Activated T-helper 2 cell treated with anti-CD3 and anti-CD28 coated beads, Interferon-gamma antibody, Interleukin-2, Interleukin-4, amounts not matched to agents 10 μg/mL and 5 μg/mL and 100 μg/mL, durations not matched to agents 14 hours and 24 hours and 36 hours (primary cell): ENCODE measurements at regions of chr14 and their contacts with region 1.

Region 1: GRCh38 chr14:64540208-64541157 is at the start of gene HSPA2:
- DNase-seq: peak; percentile 95
- H3K4me3 Mint-ChIP-seq: peak within 1 kb of the TSS; percentile 93
- H3K27ac Mint-ChIP-seq: peak within 1 kb of the TSS; percentile 78
- H3K4me1 Mint-ChIP-seq: peaks cover 27% of the 10 kb centered on the region
- H3K27me3 Mint-ChIP-seq: peaks cover 42% of the 10 kb centered on the region
- total RNA-seq, gene HSPA2: 6.6 and 7.1 TPM in 2 replicates

Region 2: DNA sequence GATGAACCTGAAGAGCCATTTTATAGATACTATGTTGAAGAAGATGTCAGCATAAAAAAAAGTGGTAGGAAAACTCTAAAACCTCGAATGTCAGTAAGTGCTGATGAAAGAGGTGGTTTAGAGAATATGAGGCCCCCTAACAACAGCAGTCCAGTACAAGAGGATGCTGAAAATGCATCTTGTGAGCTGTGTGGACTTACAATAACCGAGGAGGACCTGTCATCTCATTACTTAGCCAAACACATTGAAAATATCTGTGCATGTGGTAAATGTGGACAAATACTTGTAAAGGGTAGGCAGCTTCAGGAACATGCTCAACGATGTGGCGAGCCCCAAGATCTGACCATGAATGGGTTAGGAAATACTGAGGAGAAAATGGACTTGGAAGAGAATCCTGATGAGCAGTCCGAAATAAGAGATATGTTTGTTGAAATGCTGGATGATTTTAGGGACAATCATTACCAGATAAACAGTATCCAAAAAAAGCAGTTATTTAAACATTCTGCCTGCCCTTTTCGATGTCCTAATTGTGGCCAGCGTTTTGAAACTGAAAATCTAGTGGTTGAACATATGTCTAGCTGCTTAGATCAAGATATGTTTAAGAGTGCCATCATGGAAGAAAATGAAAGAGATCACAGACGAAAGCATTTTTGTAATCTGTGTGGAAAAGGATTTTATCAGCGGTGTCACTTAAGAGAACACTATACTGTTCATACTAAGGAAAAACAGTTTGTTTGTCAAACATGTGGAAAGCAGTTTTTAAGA is 17.7 kb before region 1 on chr14:
- intact Hi-C with region 1: loop called (anchors 2 kb)
- DNase-seq: no peak
- H3K4me3 Mint-ChIP-seq: no peak overlapping the region
- H3K27ac Mint-ChIP-seq: no peak overlapping the region
- H3K4me1 Mint-ChIP-seq: peaks cover 11% of the 10 kb centered on the region
- H3K27me3 Mint-ChIP-seq: no peaks in the 10 kb centered on the region

Region 3: GRCh38 chr14:64636208-64636979 is 95.9 kb after region 1 on chr14:
- intact Hi-C with region 1: loop called (anchors 2 kb)
- DNase-seq: peak; percentile 56
- H3K4me3 Mint-ChIP-seq: no peak overlapping the region
- H3K27ac Mint-ChIP-seq: no peak overlapping the region
- H3K4me1 Mint-ChIP-seq: peaks cover 3% of the 10 kb centered on the region
- H3K27me3 Mint-ChIP-seq: peaks cover 10% of the 10 kb centered on the region

Region 4: DNA sequence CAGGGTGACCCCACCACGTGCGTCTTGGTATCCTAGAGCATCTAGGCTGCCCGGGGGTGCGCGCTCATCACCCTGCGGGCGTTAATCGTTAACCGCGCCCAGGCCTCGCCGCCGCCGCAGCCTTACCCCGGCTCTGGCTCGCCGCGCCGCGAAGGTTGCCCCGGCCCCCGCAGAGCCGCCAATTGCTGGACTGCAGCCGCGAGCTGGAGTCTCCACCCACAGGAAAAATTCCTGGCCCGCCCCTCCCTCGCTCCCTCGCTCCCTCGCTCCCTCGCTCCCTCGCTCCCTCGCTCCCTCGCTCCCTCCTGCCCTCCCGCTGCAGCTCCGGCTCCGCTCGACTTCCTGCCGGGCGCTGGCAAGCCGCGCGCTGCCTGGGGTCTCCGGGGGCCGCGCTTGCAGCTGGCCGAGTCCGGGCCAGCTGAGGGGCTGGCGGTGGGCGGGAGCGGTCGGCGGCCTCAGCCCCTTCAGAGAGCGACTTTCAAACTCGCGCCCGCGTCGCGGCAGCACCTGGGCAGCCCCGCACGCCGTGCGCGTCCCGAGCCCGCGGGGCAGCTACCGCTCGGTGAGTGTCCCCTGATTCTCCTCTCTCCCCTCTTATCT is 163.8 kb after region 1 on chr14 and contains the start of gene PLEKHG3:
- intact Hi-C with region 1: loop called (anchors 5 kb)
- DNase-seq: no peak
- H3K4me3 Mint-ChIP-seq: peak within 1 kb of the TSS; percentile 75
- H3K27ac Mint-ChIP-seq: no peak within 1 kb of the TSS
- H3K4me1 Mint-ChIP-seq: peaks cover 45% of the 10 kb centered on the region
- H3K27me3 Mint-ChIP-seq: peaks cover 63% of the 10 kb centered on the region
- total RNA-seq, gene PLEKHG3: 1.0 and 1.9 TPM in 2 replicates